Activated naive CD4-positive, alpha-beta T cell treated with anti-CD3 and anti-CD28 coated beads for 36 hours (primary cell): ENCODE measurements at regions of chr2 and their contacts with region 1.

Region 1: DNA sequence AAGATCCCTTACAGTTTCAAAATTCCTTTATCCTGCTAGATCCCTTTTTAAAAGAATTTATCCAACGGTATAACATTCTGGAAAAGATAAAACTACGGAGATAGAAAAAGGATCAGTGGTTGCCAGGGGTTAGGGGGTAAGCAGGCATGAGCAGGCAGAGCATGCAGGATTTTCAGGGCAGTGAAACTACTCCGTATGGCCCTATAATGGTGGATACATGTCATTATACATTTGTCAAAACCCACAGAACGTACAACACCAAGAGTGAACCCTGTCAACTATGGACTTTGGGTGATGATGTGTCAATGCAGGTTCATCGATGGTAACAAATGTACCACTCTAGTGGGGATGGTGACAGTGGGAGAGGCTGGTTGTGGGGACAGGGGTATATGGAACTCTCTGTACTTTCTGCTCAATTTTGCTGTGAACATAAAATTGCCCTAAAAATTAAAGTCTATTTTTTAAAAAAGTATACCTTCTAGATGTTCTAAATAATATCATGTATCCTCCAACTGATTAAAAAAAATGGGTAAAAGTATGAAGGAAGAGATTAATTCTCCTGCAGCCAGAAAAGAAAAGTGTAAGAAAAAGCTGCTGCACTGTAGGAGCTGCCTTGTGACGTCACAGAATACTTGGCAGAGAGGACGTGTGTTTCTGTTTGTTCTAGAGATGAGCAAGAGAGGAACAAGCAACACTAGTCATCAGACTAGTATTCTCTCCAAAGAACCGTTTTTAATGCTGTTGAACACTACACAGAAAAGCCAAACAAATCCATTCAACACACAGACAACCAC is 23.6 kb downstream of the ANKRD44 start:
- DNase-seq: peak; percentile 74
- H3K4me3 Mint-ChIP-seq: peak overlapping the region; percentile 64
- H3K27ac Mint-ChIP-seq: peak overlapping the region; percentile 97
- H3K4me1 Mint-ChIP-seq: peaks cover 81% of the 10 kb centered on the region
- H3K27me3 Mint-ChIP-seq: no peaks in the 10 kb centered on the region

Region 2: DNA sequence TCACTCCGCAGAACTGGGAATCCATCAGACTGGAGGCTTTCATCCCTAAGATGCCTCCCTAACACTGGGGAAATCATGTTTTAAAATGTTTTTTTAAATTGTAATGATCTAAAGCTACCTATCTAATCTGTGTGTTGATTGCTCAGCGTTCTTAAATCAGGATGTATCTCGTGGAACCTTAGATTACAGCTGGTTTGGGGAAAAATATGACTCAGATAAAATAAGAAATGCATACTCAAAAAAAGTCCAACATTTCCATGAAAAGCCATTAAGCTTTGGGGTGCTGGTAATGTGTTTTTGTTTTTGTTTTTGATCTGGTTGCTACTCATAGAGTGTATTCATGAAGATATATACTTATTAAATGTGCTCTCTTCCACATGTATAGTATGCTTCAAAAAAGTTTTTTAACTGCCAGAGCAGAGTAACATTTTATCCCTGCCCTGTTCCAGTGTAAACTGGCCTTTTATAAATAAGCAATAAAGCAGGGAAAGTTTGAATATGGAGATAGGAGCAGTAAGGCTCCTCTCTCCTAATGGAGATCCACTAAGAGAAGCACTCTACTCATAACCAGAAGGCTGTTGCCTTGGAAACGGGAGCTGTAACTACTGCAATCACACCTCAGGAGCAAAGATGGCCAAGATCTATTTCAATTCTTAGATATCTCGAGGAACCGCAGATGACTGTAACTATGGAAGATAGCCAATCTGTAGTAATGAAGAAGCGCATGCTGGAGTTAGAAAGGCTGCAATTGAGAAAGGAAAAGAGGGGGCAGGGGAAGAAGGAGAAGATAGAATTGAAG is 18.0 kb before region 1 on chr2:
- CTCF ChIA-PET with region 1: interaction called, 3 read pairs
- intact Hi-C with region 1: loop called (anchors 1 kb)
- DNase-seq: peak; percentile 71
- H3K4me3 Mint-ChIP-seq: no peak overlapping the region
- H3K27ac Mint-ChIP-seq: peak overlapping the region; percentile 73
- H3K4me1 Mint-ChIP-seq: peaks cover 93% of the 10 kb centered on the region
- H3K27me3 Mint-ChIP-seq: no peaks in the 10 kb centered on the region

Region 3: DNA sequence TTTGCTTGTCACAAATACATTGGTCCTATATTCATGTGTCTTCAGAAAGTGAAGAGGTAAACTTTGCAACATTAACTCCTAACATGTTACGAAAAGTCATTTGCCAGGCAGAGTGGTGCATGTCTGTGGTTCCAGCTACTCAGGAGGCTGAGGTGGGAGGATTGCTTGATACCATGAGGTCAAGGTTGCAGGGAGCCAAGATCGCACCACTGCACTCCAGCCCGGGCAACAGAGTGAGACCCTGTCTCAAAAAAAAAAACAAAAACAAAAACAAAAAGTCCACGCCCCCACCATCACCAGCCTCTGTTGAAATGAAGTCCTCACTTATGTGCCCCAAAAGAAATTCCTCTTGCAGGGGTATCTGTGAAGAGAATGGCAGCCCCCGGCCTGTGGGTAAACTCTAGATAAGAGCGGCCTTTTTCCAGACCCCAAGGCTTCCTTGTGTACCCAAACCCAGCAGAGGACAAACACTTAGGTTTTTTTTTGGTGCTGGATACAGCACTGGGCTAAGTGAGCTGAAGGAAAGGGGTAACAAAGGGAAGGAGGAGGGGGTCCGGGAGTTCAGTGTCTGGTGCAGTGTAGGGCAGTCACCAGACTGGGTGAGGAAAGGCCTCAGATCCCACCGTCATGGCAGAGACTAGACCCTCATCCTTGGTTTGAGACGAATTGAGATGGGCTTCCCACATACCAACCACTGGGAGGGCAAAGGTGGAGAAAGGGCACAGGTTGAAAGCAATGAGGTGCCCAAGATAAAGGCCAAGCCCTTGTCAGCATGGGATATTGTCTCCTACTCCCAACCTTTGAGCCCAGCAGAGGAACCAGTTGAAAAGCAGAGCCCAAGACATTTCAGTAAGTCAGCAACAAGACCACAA is 193.4 kb after region 1 on chr2:
- CTCF ChIA-PET with region 1: no interaction called
- intact Hi-C with region 1: no loop called
- DNase-seq: no peak
- H3K4me3 Mint-ChIP-seq: no peak overlapping the region
- H3K27ac Mint-ChIP-seq: no peak overlapping the region
- H3K4me1 Mint-ChIP-seq: peaks cover under 1% of the 10 kb centered on the region
- H3K27me3 Mint-ChIP-seq: no peaks in the 10 kb centered on the region